CD14-positive monocyte (primary cell): ENCODE measurements at regions of chr20 and their contacts with region 1.

Region 1: DNA sequence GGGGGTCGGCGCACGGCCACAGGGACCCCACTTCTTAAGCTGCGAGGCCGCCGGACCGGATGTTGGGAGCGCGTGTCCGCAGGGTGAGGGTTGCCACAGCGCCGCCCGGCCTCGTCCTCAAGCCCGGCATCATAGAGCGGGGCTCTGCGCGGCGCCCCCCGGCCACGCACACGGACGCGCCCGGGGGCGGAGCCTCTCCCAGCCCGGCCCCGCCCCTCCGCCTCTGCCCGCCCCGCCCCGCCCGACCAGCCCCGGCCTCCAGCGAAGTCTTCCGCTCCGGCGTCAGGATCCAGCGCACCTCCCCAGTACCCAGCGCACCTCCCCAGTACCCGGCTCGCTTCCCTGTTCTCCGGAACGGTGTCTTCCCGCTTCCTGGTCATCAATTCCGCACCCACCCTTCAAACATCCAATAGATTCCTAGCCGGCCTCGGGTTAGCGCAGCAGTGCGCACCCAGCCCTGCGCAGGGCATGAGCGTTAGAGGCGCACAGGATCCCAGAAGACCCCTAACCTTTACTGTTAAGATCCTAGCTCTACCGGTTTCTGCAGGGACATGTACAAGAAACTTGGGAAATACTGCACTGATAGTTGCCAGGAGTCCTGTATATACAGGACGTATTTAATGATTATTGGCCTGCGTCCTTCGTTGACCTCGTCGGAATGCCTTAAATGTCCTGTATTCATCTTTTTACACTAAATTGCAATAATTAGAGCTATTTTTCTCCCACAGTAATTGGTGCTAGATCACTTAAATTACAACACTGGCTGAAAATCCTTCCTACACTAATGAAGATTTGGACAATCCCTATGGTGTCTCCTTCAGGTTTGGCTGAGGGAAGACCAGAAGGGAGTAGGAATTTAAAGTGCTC is 535 bp upstream of the DNAAF9 start:
- DNase-seq: peak; percentile 62 to 74 (median 62)
- H3K4me3 ChIP-seq: peak overlapping the region; percentile 93 to 96 (median 95)
- H3K4me3 Mint-ChIP-seq: peak overlapping the region; percentile 93 to 97
- H3K27ac ChIP-seq: peak overlapping the region; percentile 92 to 96
- H3K27ac Mint-ChIP-seq: peak overlapping the region; percentile 90 to 99 (median 97)
- H3K4me1 ChIP-seq: peaks cover 35 to 45% of the 10 kb centered on the region in 2 donors
- H3K4me1 Mint-ChIP-seq: peaks cover 46% of the 10 kb centered on the region
- H3K27me3 ChIP-seq: no peaks in the 10 kb centered on the region
- H3K27me3 Mint-ChIP-seq: peaks cover 0 to 2% (median 0%) of the 10 kb centered on the region in 3 donors
- CTCF ChIP-seq: no peak

Region 2: GRCh38 chr20:3470627-3471396 is 62.8 kb after region 1 on chr20 and contains the start of gene ATRN:
- intact Hi-C with region 1: loop called (anchors 2 to 5 kb)
- DNase-seq: peak; percentile 81 to 84 (median 83)
- H3K4me3 ChIP-seq: peak within 1 kb of the TSS; percentile 82 to 90 (median 89)
- H3K4me3 Mint-ChIP-seq: peak within 1 kb of the TSS; percentile 93 to 99
- H3K27ac ChIP-seq: peak within 1 kb of the TSS; percentile 64 to 78
- H3K27ac Mint-ChIP-seq: peak within 1 kb of the TSS; percentile 68 to 90 (median 85)
- H3K4me1 ChIP-seq: peaks cover 21 to 33% of the 10 kb centered on the region in 2 donors
- H3K4me1 Mint-ChIP-seq: peaks cover 33% of the 10 kb centered on the region
- H3K27me3 ChIP-seq: no peaks in the 10 kb centered on the region
- H3K27me3 Mint-ChIP-seq: peaks cover 2 to 4% (median 3%) of the 10 kb centered on the region in 3 donors
- CTCF ChIP-seq: no peak
- polyA plus RNA-seq, gene ATRN: 10.2 to 17.4 (median 11.5) TPM

Region 3: DNA sequence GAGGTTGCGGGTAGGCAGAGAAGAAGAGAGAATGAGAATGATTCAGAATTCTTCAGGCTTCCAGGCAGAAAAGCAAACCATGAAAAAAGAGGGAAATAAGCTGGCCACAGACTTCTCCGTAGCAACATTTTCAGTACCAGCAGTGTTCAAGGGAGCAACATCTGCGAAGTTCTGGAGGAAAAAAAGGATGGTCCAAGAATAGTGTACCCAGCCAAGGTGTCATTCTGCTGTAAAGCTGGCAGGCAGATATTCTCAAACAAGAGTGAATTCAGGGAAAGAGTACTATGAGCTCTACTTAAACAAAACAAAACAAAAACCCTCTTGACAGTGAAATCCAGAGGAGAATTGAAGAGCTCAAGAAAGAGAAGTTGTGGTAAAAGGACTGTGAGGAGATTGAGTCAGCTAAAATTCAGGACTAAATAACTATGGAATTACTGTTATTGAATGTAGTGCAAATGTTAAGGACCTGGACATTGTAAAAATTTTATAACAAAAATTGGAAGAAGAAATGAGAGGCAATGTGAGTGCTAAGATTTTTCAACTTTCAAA is 149.3 kb after region 1 on chr20:
- intact Hi-C with region 1: loop called in 1 of 2 experiments (anchors 5 kb)
- DNase-seq: peak in 2 of 3 donors; percentile 17 to 31
- H3K4me3 ChIP-seq: peak overlapping the region; percentile 25 to 74 (median 69)
- H3K4me3 Mint-ChIP-seq: peak overlapping the region; percentile 73 to 92
- H3K27ac ChIP-seq: peak overlapping the region in 1 of 2 donors; percentile 79
- H3K27ac Mint-ChIP-seq: peak overlapping the region; percentile 79 to 93 (median 87)
- H3K4me1 ChIP-seq: peaks cover 38 to 57% of the 10 kb centered on the region in 2 donors
- H3K4me1 Mint-ChIP-seq: peaks cover 51% of the 10 kb centered on the region
- H3K27me3 ChIP-seq: no peaks in the 10 kb centered on the region
- H3K27me3 Mint-ChIP-seq: peaks cover 0 to 1% (median 0%) of the 10 kb centered on the region in 3 donors
- CTCF ChIP-seq: no peak

Region 4: DNA sequence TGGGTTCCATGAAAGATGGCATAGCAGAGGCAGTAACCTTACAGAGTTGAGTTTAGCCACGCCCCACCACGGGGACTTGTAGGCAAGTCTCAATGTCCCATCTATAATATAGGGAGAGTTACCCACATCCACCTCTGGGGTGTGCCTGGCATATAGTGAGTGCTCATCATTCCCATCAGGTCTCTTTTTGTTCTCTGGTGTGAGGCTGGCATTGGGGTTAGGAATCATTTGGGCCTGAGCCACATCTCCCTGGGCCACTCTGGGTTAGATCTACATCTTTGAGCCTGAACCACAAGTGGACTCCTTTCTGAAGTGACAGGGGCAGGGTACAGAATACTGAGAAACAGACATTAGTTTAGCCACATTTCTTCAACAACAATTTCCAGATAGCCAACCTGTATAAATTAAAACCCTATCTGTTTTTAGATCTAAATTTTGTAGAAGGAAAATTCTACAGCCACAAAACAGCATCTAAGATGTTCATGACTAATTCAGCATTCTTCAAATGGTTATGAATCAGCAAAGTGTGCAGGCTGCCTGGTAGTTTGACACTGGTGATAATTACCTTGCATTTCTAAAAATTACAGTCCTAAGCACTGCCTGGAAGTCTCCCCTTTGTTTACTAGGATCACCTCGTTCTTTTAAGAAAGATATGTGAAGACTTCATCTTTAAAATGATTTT is 587.2 kb after region 1 on chr20:
- intact Hi-C with region 1: no loop called
- DNase-seq: peak in 2 of 3 donors; percentile 37 to 39
- H3K4me3 ChIP-seq: no peak overlapping the region
- H3K4me3 Mint-ChIP-seq: no peak overlapping the region
- H3K27ac ChIP-seq: peak overlapping the region; percentile 23 to 76
- H3K27ac Mint-ChIP-seq: peak overlapping the region; percentile 64 to 92 (median 85)
- H3K4me1 ChIP-seq: peaks cover 30 to 50% of the 10 kb centered on the region in 2 donors
- H3K4me1 Mint-ChIP-seq: peaks cover 62% of the 10 kb centered on the region
- H3K27me3 ChIP-seq: no peaks in the 10 kb centered on the region
- H3K27me3 Mint-ChIP-seq: peaks cover 0 to 2% (median 0%) of the 10 kb centered on the region in 3 donors
- CTCF ChIP-seq: no peak